PC-9 (cell line): ENCODE measurements at regions of chr14 and their contacts with region 1.

Region 1: GRCh38 chr14:105314287-105315200 is at the start of gene PACS2:
- DNase-seq: peak; percentile 45 to 66
- H3K4me3 ChIP-seq: peak within 1 kb of the TSS; percentile 98
- H3K27ac ChIP-seq: no peak within 1 kb of the TSS
- H3K4me1 ChIP-seq: peaks cover 14% of the 10 kb centered on the region
- H3K27me3 ChIP-seq: no peaks in the 10 kb centered on the region
- CTCF ChIP-seq: no peak
- total RNA-seq, gene PACS2: 43.3 and 52.2 TPM in 2 replicates

Region 2: DNA sequence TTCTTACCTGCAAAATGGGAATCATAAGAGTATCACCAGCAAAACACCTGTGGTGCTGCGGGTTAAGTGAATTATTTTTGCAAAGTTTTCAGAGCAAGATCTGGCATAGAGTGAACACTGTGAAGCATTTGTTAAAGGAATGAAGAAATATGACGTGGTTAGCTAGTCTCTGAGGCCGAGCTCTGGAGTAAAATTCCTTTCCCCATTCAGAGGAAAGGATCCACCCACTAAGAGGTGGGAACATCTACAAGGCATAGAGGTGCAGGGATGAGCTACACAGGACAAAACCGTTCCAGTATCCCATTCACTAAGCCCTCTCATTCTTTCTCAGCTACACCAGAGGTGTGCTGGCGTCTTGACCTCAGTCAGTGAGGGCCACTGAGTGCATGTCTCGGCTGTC is 194.5 kb before region 1 on chr14:
- CTCF ChIA-PET with region 1: no interaction called
- POLR2A ChIA-PET with region 1: interaction called, 11 read pairs
- intact Hi-C with region 1: no loop called
- DNase-seq: no peak
- H3K4me3 ChIP-seq: no peak overlapping the region
- H3K27ac ChIP-seq: no peak overlapping the region
- H3K4me1 ChIP-seq: peaks cover 38% of the 10 kb centered on the region
- H3K27me3 ChIP-seq: no peaks in the 10 kb centered on the region
- CTCF ChIP-seq: no peak

Region 3: DNA sequence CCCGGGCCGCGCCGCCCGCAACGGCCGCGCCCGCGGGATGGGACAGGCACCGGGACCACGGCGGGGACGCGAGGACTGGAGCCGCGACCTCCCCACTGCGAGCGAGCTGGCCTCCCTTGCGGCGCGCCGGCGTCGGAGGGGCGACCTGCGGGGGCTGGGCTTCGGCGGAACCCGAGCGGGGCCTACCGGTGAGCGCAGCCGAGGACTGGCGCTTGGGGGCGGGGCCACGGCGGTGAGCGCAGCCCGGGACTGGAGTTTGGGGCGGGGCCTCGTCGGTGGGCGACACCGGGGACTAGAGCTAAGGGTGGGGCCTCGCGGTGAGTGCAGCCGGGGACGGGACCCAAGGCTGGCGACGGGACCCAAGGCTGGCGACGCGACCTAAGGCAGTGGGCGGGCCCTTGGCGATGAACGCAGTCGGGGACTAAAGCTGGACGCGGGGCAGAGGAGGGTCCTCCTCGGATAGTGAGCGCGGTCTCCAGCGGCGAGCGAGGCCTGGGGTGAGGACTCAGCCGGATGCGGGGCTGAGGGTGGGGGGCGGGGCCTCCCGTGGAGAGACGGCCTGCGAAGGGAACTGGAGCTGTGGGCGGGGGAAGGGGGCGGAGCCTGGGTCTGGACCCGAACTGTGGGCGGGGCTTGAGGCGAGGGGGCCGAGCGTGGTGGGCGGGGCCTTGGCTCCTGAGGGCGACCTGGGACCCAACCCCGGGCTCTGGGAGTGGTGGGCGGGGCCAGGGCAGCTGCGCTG is 13.6 kb before region 1 on chr14 and contains the start of gene BRF1:
- CTCF ChIA-PET with region 1: no interaction called
- POLR2A ChIA-PET with region 1: interaction called, 16 read pairs
- intact Hi-C with region 1: no loop called
- DNase-seq: peak; percentile 86 to 97
- H3K4me3 ChIP-seq: peak within 1 kb of the TSS; percentile 82
- H3K27ac ChIP-seq: peak within 1 kb of the TSS; percentile 55
- H3K4me1 ChIP-seq: peaks cover 9% of the 10 kb centered on the region
- H3K27me3 ChIP-seq: no peaks in the 10 kb centered on the region
- CTCF ChIP-seq: no peak
- total RNA-seq, gene BRF1: 24.8 and 31.2 TPM in 2 replicates